HEK293 (cell line): ENCODE measurements at regions of chr6 and their contacts with region 1.

Region 1: GRCh38 chr6:163159689-163160088 is 254.8 kb upstream of the QKI start:
- H3K4me3 ChIP-seq: no peak overlapping the region
- H3K27ac ChIP-seq: no peak overlapping the region
- H3K4me1 ChIP-seq: no peaks in the 10 kb centered on the region
- CTCF ChIP-seq: no peak

Region 2: GRCh38 chr6:163132050-163132750 is 27.5 kb before region 1 on chr6:
- CTCF ChIA-PET with region 1: no interaction called
- POLR2A ChIA-PET with region 1: no interaction called
- H3K4me3 ChIP-seq: no peak overlapping the region
- H3K27ac ChIP-seq: no peak overlapping the region
- H3K4me1 ChIP-seq: no peaks in the 10 kb centered on the region
- CTCF ChIP-seq: no peak

Region 3: GRCh38 chr6:163170294-163170883 is 10.7 kb after region 1 on chr6:
- CTCF ChIA-PET with region 1: interaction called, 14 read pairs
- POLR2A ChIA-PET with region 1: no interaction called
- H3K4me3 ChIP-seq: no peak overlapping the region
- H3K27ac ChIP-seq: no peak overlapping the region
- H3K4me1 ChIP-seq: no peaks in the 10 kb centered on the region
- CTCF ChIP-seq: no peak; the same call in 1 of the 2 replicates